CD4-positive, alpha-beta T cell (primary cell): ENCODE measurements at regions of chr22 and their contacts with region 1.

Region 1: DNA sequence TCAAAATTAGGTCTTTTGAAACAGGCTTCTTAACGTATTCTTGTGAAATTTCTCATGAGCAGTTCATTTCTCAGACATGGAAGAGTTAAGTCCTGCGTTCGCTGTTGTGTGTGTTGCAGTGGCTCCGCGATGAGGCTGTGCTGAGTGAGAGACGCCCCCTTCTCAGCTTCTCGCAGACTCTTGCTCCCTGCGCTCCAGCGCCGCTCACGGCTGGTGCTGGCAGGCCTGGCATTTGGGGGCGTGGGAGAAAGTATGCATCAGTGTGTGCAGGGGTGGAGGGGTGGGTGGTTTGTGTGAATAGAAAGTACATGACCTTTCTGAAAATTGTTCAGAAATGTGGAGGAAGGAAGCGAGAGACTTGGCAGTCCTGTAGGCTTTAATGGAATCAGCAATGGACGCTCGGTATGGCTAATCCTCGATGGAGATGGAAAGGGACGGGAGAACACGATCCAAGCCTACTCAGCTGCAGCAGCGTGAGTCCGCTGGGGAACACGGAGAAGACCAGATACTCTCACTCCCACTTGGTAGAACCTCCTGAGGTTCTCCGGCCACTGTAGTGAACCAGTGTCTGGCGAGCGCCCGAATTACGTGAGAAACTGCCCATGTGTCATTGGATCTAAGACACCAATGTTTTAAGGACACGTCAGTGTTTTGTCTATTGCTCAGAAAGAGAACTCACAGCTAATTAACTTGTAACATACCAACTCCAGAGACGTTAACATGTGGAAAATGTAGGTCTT is 5.9 kb downstream of the TAB1 start:
- DNase-seq: peak in 2 of 14 experiments; percentile 11 to 15
- ATAC-seq: peak; percentile 93
- H3K4me3 ChIP-seq: no peak overlapping the region
- H3K4me3 Mint-ChIP-seq: peak overlapping the region; percentile 9
- H3K27ac ChIP-seq: no peak overlapping the region
- H3K27ac Mint-ChIP-seq: no peak overlapping the region
- H3K4me1 ChIP-seq: peaks cover 35% of the 10 kb centered on the region
- H3K4me1 Mint-ChIP-seq: peaks cover 70% of the 10 kb centered on the region
- H3K27me3 ChIP-seq: no peaks in the 10 kb centered on the region
- H3K27me3 Mint-ChIP-seq: no peaks in the 10 kb centered on the region
- CTCF ChIP-seq: no peak

Region 2: GRCh38 chr22:39283322-39284004 is 122.1 kb before region 1 on chr22:
- CTCF ChIA-PET with region 1: no interaction called
- POLR2A ChIA-PET with region 1: no interaction called
- intact Hi-C with region 1: no loop called
- DNase-seq: no peak
- ATAC-seq: no peak
- H3K4me3 ChIP-seq: no peak overlapping the region
- H3K4me3 Mint-ChIP-seq: no peak overlapping the region
- H3K27ac ChIP-seq: no peak overlapping the region
- H3K27ac Mint-ChIP-seq: no peak overlapping the region
- H3K4me1 ChIP-seq: peaks cover 8% of the 10 kb centered on the region
- H3K4me1 Mint-ChIP-seq: peaks cover 8% of the 10 kb centered on the region
- H3K27me3 ChIP-seq: no peaks in the 10 kb centered on the region
- H3K27me3 Mint-ChIP-seq: peaks cover 5% of the 10 kb centered on the region
- CTCF ChIP-seq: no peak

Region 3: DNA sequence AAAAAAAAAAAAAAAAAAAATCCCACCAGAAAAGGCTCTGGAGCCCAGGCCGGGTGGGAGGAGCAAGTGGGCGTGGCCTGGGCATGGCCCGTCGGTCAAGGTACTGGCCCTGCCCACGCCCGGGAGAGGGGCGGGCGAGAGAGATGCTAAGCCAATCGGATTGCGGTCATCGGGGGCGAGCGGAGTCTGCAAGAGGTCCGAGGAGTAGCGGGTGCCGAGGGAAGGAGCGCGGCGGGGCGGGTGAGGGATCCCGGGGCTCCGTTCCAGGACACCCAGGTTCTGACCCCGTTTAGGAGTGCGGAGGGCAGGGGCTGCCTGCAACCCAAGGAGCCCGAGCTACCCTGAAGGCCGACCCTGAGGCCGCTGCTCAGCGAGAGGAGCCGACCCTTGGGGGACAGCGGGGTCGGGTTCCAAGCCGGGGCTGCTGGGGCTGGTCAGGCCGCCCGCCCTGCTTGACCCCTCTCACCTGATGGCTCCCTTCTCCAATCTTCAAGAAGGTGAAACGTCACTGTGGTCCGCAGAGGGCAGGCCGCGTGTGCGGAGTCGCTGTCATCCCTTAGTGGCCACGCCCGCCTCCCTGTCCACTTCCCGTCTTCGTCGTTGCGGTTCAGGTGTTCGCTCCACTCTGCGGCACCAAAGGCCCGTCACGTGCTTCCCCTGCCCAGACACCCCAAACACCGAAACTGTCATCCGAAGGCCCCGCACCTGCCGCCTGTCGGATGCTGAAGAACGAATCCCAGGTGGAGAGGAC is 17.1 kb before region 1 on chr22:
- CTCF ChIA-PET with region 1: no interaction called
- POLR2A ChIA-PET with region 1: no interaction called
- intact Hi-C with region 1: loop called in 1 of 2 experiments (anchors 1 kb)
- DNase-seq: peak; percentile 69 to 95 (median 79)
- ATAC-seq: peak; percentile 93
- H3K4me3 ChIP-seq: peak overlapping the region; percentile 92
- H3K4me3 Mint-ChIP-seq: peak overlapping the region; percentile 95
- H3K27ac ChIP-seq: peak overlapping the region; percentile 81 to 88
- H3K27ac Mint-ChIP-seq: peak overlapping the region; percentile 99
- H3K4me1 ChIP-seq: peaks cover 28% of the 10 kb centered on the region
- H3K4me1 Mint-ChIP-seq: peaks cover 21% of the 10 kb centered on the region
- H3K27me3 ChIP-seq: no peaks in the 10 kb centered on the region
- H3K27me3 Mint-ChIP-seq: no peaks in the 10 kb centered on the region
- CTCF ChIP-seq: no peak

Region 4: DNA sequence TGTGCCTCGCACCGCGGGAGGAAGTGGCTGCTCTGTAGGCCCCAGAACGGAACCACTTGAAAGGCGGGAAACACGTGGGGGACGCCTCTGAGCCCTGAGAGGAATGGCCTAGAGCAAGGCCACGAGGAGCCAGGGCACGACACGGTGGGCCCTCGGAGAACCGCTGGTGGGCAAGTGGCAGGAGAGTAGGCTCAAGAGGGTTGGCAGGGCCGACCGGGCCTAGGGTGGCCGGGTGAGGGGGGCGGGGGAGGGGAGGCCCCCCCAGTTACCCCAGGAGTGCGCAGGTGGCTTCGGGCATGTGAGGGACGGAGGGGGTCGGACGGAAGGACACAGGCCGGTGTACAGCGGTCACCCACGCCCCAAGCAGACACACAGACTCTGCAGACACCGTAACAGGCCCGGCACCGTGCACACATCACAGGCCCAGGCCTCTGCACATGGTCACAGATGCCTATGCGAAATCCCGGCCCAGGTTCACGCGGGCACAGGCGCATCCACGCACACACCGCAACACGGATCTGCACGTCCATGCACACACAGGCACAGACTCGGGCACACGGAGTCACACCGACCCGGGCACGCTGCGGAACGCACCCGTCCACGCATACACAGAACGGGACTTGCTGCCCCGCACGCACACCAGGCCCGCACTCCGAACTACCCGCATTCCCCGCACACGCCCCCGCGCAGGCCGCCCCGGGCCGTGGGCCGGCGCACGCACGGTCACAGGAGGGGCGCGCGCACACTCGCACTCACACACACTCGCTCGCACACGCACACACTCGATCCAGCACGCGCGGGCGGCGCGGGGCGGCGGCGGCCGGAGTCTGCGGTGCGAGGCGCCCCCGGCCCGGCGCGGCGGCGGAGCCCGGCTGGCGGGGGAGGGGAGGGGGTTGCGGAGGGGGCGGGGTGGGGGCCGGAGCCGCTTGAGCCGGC is 51.0 kb after region 1 on chr22 and contains the start of gene MGAT3:
- CTCF ChIA-PET with region 1: no interaction called
- POLR2A ChIA-PET with region 1: no interaction called
- intact Hi-C with region 1: loop called in 1 of 2 experiments (anchors 5 kb)
- DNase-seq: peak in 2 of 14 experiments; percentile 10 to 41
- ATAC-seq: peak; percentile 35
- H3K4me3 ChIP-seq: no peak within 1 kb of the TSS
- H3K4me3 Mint-ChIP-seq: peak within 1 kb of the TSS; percentile 76
- H3K27ac ChIP-seq: no peak within 1 kb of the TSS
- H3K27ac Mint-ChIP-seq: no peak within 1 kb of the TSS
- H3K4me1 ChIP-seq: peaks cover 19% of the 10 kb centered on the region
- H3K4me1 Mint-ChIP-seq: peaks cover 21% of the 10 kb centered on the region
- H3K27me3 ChIP-seq: peaks cover 24 to 25% of the 10 kb centered on the region in 2 experiments
- H3K27me3 Mint-ChIP-seq: peaks cover 47% of the 10 kb centered on the region
- CTCF ChIP-seq: no peak
- total RNA-seq, gene MGAT3: 0.17 TPM in 1 of 2 experiments, not detected in the other

Region 5: GRCh38 chr22:39502109-39502788 is 96.7 kb after region 1 on chr22 and contains the start of gene MIEF1:
- CTCF ChIA-PET with region 1: no interaction called
- POLR2A ChIA-PET with region 1: no interaction called
- intact Hi-C with region 1: loop called in 1 of 2 experiments (anchors 5 kb)
- DNase-seq: peak; percentile 70 to 96 (median 86)
- ATAC-seq: peak; percentile 94
- H3K4me3 ChIP-seq: peak within 1 kb of the TSS; percentile 67
- H3K4me3 Mint-ChIP-seq: peak within 1 kb of the TSS; percentile 99
- H3K27ac ChIP-seq: peak within 1 kb of the TSS; percentile 61 to 71
- H3K27ac Mint-ChIP-seq: peak within 1 kb of the TSS; percentile 92
- H3K4me1 ChIP-seq: peaks cover 39% of the 10 kb centered on the region
- H3K4me1 Mint-ChIP-seq: peaks cover 47% of the 10 kb centered on the region
- H3K27me3 ChIP-seq: no peaks in the 10 kb centered on the region
- H3K27me3 Mint-ChIP-seq: no peaks in the 10 kb centered on the region
- CTCF ChIP-seq: no peak
- total RNA-seq, gene MIEF1: 19.8 to 20.4 TPM

Region 6: GRCh38 chr22:39514373-39514973 is 109.0 kb after region 1 on chr22:
- CTCF ChIA-PET with region 1: no interaction called
- POLR2A ChIA-PET with region 1: no interaction called
- intact Hi-C with region 1: loop called in 1 of 2 experiments (anchors 2 kb)
- DNase-seq: peak in 11 of 14 experiments; percentile 42 to 68 (median 51)
- ATAC-seq: peak; percentile 58
- H3K4me3 ChIP-seq: no peak overlapping the region
- H3K4me3 Mint-ChIP-seq: no peak overlapping the region
- H3K27ac ChIP-seq: no peak overlapping the region
- H3K27ac Mint-ChIP-seq: peak overlapping the region; percentile 4
- H3K4me1 ChIP-seq: peaks cover 8% of the 10 kb centered on the region
- H3K4me1 Mint-ChIP-seq: peaks cover 16% of the 10 kb centered on the region
- H3K27me3 ChIP-seq: no peaks in the 10 kb centered on the region
- H3K27me3 Mint-ChIP-seq: no peaks in the 10 kb centered on the region
- CTCF ChIP-seq: peak; percentile 69

Region 7: GRCh38 chr22:39699631-39700360 is 294.3 kb after region 1 on chr22:
- CTCF ChIA-PET with region 1: no interaction called
- POLR2A ChIA-PET with region 1: no interaction called
- intact Hi-C with region 1: no loop called
- DNase-seq: no peak
- ATAC-seq: no peak
- H3K4me3 ChIP-seq: no peak overlapping the region
- H3K4me3 Mint-ChIP-seq: no peak overlapping the region
- H3K27ac ChIP-seq: no peak overlapping the region
- H3K27ac Mint-ChIP-seq: no peak overlapping the region
- H3K4me1 ChIP-seq: no peaks in the 10 kb centered on the region
- H3K4me1 Mint-ChIP-seq: no peaks in the 10 kb centered on the region
- H3K27me3 ChIP-seq: no peaks in the 10 kb centered on the region
- H3K27me3 Mint-ChIP-seq: peaks cover 4% of the 10 kb centered on the region
- CTCF ChIP-seq: no peak